ENCODE measurements at regions of chr21 and their contacts with region 1.

Region 1: GRCh38 chr21:34000375-34000774 is 73.0 kb upstream of the MRPS6 start:
- DNase-seq: no peak
- ATAC-seq: no peak

Region 2: GRCh38 chr21:33968080-33968994 is 32.0 kb before region 1 on chr21:
- intact Hi-C with region 1: no loop called
- DNase-seq: no peak
- ATAC-seq: peak; percentile 75

Region 3: GRCh38 chr21:34029743-34030528 is 29.6 kb after region 1 on chr21:
- intact Hi-C with region 1: loop called (anchors 2 kb)
- DNase-seq: no peak
- ATAC-seq: peak; percentile 93